Motor neuron (in vitro differentiated cells): ENCODE measurements at regions of chr1 and their contacts with region 1.

Region 1: DNA sequence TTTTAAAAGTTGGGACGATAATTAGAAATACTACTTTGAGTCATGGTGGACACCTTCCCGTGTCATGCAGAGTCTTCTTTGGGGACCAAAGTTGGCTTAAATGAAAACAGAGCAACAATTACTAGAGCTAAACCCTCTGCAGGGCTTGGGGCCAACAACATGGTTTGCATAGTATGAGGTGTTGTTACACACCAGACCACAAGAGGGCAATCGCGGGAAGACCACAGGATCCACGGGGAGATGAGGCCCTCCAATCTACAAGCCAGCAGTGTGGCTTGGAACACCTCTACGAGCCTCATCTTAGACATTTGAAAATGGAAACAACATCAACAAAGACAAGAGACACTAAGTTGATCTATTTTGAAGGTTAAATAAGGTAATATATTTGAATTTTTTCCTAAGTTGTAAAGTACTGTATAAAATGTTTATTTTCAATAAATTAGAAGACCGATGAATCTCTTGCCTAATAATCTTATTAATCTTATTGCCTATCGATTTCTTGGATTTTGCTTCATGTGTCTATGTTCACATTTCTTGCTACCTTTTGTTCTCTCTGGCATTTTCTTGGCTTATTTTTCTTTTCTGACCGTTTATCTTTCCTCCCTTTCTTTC is 8.2 kb upstream of the SMCP start:
- ATAC-seq: peak in 4 of 8 experiments; percentile 50 to 87 (median 65)
- H3K4me3 ChIP-seq: no peak overlapping the region
- H3K27ac ChIP-seq: no peak overlapping the region
- H3K4me1 ChIP-seq: no peaks in the 10 kb centered on the region

Region 2: DNA sequence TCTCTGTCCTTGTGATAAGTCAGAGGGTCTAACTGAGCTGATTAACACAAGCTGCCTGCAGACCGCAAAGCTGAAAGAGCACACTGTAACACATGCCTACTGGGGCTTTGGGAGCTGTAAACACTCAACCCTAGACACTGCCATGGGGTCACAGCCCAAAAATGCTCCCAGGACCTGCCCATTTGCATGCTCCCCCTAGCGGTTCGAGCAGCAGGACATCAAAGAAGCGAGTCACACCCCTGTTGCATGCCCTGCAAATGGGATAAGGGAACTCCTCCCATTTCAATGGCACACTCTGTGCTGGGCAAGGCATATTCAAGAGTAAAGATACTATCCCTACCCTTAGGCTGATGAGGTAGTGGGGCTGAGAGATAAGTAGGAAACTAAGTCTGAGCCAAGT is 326.1 kb before region 1 on chr1:
- in situ Hi-C with region 1: no loop called
- ATAC-seq: peak in 3 of 8 experiments; percentile 32 to 87 (median 86)
- H3K4me3 ChIP-seq: no peak overlapping the region
- H3K27ac ChIP-seq: no peak overlapping the region
- H3K4me1 ChIP-seq: no peaks in the 10 kb centered on the region

Region 3: GRCh38 chr1:152654110-152654509 is 215.8 kb before region 1 on chr1:
- in situ Hi-C with region 1: loop called in 1 of 9 experiments (anchors 25 kb)
- ATAC-seq: peak in 5 of 8 experiments; percentile 34 to 90 (median 84)
- H3K4me3 ChIP-seq: no peak overlapping the region
- H3K27ac ChIP-seq: no peak overlapping the region
- H3K4me1 ChIP-seq: no peaks in the 10 kb centered on the region

Region 4: GRCh38 chr1:152926091-152926490 is 56.2 kb after region 1 on chr1:
- in situ Hi-C with region 1: loop called in 1 of 9 experiments (anchors 10 kb)
- ATAC-seq: peak in 3 of 8 experiments; percentile 66 to 85 (median 74)
- H3K4me3 ChIP-seq: no peak overlapping the region
- H3K27ac ChIP-seq: no peak overlapping the region
- H3K4me1 ChIP-seq: no peaks in the 10 kb centered on the region